Right lobe of liver (tissue), 6 donors: ENCODE measurements at regions of chr2 and their contacts with region 1.

Region 1: DNA sequence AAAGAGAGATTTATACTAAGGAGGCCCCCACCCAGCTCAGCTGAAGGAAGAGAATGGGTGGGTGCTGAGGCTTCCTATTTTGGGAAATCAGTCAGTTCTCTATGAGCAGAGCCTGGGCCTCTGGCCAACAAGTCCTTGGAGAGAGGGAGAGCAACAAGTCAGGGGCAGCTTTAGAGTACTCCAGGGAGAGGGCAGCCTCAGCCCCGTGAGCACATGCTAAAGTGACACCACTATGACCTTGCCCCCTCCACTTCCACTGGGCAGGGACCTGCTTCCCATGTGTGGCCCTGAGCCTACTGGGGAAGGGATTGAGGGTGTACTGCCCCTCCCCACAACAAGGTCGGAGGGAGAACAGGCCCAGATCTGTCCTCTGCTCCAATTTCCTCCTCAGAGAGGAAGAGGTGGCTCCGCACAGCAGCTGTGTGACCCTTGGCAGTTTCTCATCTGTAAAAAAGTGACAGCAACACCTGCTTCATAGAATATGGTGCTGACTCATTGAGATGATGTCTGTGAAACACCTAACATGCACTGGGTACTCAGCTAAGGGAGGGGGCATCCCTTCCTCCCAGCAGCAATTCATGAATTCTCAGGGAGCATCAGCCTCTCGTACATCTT is 72.9 kb downstream of the CLHC1 start:
- DNase-seq: peak in 1 of 3 donors; percentile 42
- ATAC-seq: peak; percentile 21 to 44 (median 34)
- H3K4me3 ChIP-seq: no peak overlapping the region
- H3K27ac ChIP-seq: peak overlapping the region in 1 of 3 donors; percentile 28
- H3K4me1 ChIP-seq: peaks cover 0 to 10% (median 0%) of the 10 kb centered on the region in 4 donors
- H3K27me3 ChIP-seq: no peaks in the 10 kb centered on the region
- CTCF ChIP-seq: no peak
- POLR2A ChIP-seq: no peak

Region 2: GRCh38 chr2:55026202-55026601 is 132.9 kb before region 1 on chr2:
- intact Hi-C with region 1: loop called (anchors 10 kb)
- DNase-seq: no peak
- ATAC-seq: peak; percentile 47 to 78 (median 64)
- H3K4me3 ChIP-seq: no peak overlapping the region
- H3K27ac ChIP-seq: no peak overlapping the region
- H3K4me1 ChIP-seq: peaks cover 0 to 3% (median 0%) of the 10 kb centered on the region in 4 donors
- H3K27me3 ChIP-seq: no peaks in the 10 kb centered on the region
- CTCF ChIP-seq: no peak
- POLR2A ChIP-seq: no peak